ENCODE measurements at regions of chr2 and their contacts with region 1.

Region 1: DNA sequence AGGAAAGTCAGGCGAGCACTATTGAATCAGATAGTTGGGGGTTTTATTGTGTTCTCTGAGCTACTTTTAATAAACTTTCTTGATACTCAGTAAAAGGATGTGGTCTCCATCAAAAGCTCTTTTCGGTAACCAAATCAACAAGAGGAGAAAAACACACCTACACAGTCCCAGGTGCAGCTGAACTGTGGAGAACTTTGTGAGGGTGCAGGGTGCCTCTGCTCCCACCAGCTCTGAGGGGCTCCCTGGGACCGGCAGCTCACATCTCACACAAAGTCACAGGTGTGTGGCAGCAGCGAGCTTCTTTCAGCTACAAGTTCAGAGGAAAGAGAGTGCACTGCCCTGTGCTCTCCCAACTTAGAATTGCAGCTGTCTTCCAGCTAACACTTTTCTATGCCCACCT is 650.4 kb downstream of the RNF144A start:
- DNase-seq: peak; percentile 80
- ATAC-seq: peak; percentile 94
- H3K4me3 Mint-ChIP-seq: peak overlapping the region; percentile 60
- H3K27ac Mint-ChIP-seq: peak overlapping the region; percentile 95
- H3K4me1 Mint-ChIP-seq: peaks cover 63% of the 10 kb centered on the region
- H3K27me3 Mint-ChIP-seq: no peaks in the 10 kb centered on the region

Region 2: DNA sequence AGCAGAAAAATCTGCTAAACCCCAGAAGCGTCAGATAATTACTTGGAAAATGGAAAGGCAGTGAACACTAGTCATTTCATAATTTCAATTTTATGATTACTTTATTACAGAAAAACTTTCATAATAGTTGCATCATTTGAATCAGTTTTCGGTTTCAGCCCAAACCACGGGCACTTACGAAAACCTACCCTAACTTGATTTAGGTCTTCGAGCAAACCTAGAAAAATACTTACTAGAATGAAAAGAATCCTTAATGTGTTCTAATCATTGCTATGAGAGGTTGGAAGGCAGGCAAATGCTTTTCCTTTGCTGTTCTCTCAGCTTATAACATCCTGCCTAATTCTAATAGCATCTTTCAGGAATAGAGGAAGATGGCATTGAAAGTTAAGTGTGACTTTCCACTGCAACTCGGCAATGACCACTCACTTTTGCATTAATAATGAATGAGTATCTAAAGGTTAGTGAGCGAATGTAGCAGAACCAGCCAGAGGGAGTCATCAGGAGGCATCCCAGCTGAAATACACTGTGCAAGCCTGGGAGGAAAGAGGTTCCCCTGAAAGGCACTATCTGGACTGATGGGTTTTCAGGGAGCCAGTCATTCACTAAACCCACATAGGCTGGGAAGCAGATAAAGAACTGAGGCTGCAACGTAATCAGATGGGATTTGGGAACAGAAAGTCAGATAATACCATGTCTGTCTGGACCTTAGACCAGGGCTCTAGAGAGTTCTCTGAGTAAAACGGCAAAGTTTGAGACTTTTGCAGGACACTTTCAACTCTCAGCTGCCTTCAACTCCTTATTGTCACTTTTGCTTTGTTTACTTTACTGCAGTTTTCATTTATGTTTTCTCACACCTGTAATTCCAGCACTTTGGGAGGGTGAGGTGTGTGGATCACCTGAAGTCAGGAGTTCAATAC is 129.7 kb before region 1 on chr2:
- CTCF ChIA-PET with region 1: interaction called, 14 read pairs
- POLR2A ChIA-PET with region 1: no interaction called
- DNase-seq: no peak
- ATAC-seq: peak; percentile 52
- H3K4me3 Mint-ChIP-seq: peak overlapping the region; percentile 51
- H3K27ac Mint-ChIP-seq: peak overlapping the region; percentile 86
- H3K4me1 Mint-ChIP-seq: peaks cover 71% of the 10 kb centered on the region
- H3K27me3 Mint-ChIP-seq: no peaks in the 10 kb centered on the region

Region 3: DNA sequence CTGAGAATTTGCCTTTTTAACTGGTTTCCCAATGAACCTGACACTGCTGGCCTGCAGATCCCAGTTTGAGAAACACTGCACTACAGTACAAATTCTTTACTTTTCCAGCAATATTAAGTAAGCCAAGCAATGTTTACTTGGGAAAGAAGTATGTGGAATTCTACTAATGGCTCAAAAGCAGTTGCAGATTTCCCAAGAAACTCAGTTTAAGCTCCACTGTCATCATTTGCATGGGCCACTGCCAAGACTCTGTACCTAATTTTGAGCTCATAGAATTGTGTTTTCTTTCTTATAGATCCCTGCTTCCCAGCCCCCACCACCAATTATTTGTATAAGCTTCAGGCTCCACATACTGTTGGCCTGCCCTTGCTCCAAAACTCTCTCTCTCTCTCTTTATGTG is 25.7 kb after region 1 on chr2:
- CTCF ChIA-PET with region 1: interaction called, 18 read pairs
- POLR2A ChIA-PET with region 1: interaction called, 4 read pairs
- DNase-seq: no peak
- ATAC-seq: no peak
- H3K4me3 Mint-ChIP-seq: no peak overlapping the region
- H3K27ac Mint-ChIP-seq: no peak overlapping the region
- H3K4me1 Mint-ChIP-seq: peaks cover 17% of the 10 kb centered on the region
- H3K27me3 Mint-ChIP-seq: no peaks in the 10 kb centered on the region

Region 4: GRCh38 chr2:7618031-7618430 is 50.4 kb after region 1 on chr2:
- CTCF ChIA-PET with region 1: no interaction called
- POLR2A ChIA-PET with region 1: no interaction called
- DNase-seq: no peak
- ATAC-seq: no peak
- H3K4me3 Mint-ChIP-seq: no peak overlapping the region
- H3K27ac Mint-ChIP-seq: no peak overlapping the region
- H3K4me1 Mint-ChIP-seq: peaks cover 17% of the 10 kb centered on the region
- H3K27me3 Mint-ChIP-seq: no peaks in the 10 kb centered on the region

Measured in activated CD8-positive, alpha-beta T cell treated with anti-CD3 and anti-CD28 coated beads, Interleukin-2, amount 10 ng/mL, durations not matched to agents 7 days and 5 days (primary cell).